Activated naive CD4-positive, alpha-beta T cell treated with anti-CD3 and anti-CD28 coated beads for 36 hours (primary cell): ENCODE measurements at regions of chr10 and their contacts with region 1.

Region 1: GRCh38 chr10:122435212-122435827 is 19.1 kb upstream of the ARMS2 start:
- DNase-seq: no peak
- H3K4me3 Mint-ChIP-seq: no peak overlapping the region
- H3K27ac Mint-ChIP-seq: no peak overlapping the region
- H3K4me1 Mint-ChIP-seq: peaks cover 5% of the 10 kb centered on the region
- H3K27me3 Mint-ChIP-seq: no peaks in the 10 kb centered on the region

Region 2: DNA sequence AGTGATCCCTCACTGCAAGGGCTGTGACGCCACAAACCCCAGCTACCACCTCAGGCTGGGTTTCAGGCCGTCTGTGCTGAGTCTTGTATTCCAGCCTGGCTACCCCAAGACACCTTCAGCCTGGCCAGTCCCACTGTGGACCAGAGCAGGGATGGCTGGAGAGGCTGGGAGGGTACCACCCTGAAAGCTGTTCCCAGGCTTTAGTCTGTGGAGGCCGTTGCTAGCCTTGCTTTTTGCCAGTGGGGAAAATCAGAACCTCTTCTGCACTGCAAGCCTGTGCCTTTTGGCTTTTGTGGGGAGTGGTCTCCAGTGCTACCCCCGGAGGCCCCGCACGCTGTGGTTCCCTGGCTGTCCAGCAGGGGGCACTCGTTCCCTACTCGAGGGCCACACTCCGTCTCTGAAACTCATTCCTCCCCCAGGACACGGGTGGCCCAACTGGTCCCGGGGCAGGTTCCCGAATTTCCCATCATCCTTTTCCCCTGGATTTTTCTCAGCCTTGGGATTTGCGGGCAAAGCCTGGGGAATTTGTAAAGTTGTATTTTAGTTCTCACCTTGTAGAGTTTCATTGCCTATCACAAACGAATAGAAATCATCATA is 292.6 kb before region 1 on chr10:
- CTCF ChIA-PET with region 1: no interaction called
- intact Hi-C with region 1: loop called (anchors 10 kb)
- DNase-seq: peak; percentile 38
- H3K4me3 Mint-ChIP-seq: no peak overlapping the region
- H3K27ac Mint-ChIP-seq: no peak overlapping the region
- H3K4me1 Mint-ChIP-seq: no peaks in the 10 kb centered on the region
- H3K27me3 Mint-ChIP-seq: peaks cover 4% of the 10 kb centered on the region

Region 3: GRCh38 chr10:122267849-122268737 is 167.2 kb before region 1 on chr10:
- CTCF ChIA-PET with region 1: interaction called, 13 read pairs
- intact Hi-C with region 1: no loop called
- DNase-seq: peak; percentile 65
- H3K4me3 Mint-ChIP-seq: no peak overlapping the region
- H3K27ac Mint-ChIP-seq: no peak overlapping the region
- H3K4me1 Mint-ChIP-seq: no peaks in the 10 kb centered on the region
- H3K27me3 Mint-ChIP-seq: peaks cover 6% of the 10 kb centered on the region

Region 4: GRCh38 chr10:122298598-122299301 is 136.6 kb before region 1 on chr10:
- CTCF ChIA-PET with region 1: interaction called, 44 read pairs
- intact Hi-C with region 1: loop called (anchors 1 kb)
- DNase-seq: peak; percentile 82
- H3K4me3 Mint-ChIP-seq: no peak overlapping the region
- H3K27ac Mint-ChIP-seq: no peak overlapping the region
- H3K4me1 Mint-ChIP-seq: peaks cover 3% of the 10 kb centered on the region
- H3K27me3 Mint-ChIP-seq: no peaks in the 10 kb centered on the region

Region 5: GRCh38 chr10:122342293-122343134 is 92.8 kb before region 1 on chr10:
- CTCF ChIA-PET with region 1: interaction called, 65 read pairs
- intact Hi-C with region 1: loop called (anchors 1 kb)
- DNase-seq: peak; percentile 80
- H3K4me3 Mint-ChIP-seq: no peak overlapping the region
- H3K27ac Mint-ChIP-seq: peak overlapping the region; percentile 31
- H3K4me1 Mint-ChIP-seq: peaks cover 10% of the 10 kb centered on the region
- H3K27me3 Mint-ChIP-seq: no peaks in the 10 kb centered on the region

Region 6: GRCh38 chr10:122368502-122369256 is 66.6 kb before region 1 on chr10:
- CTCF ChIA-PET with region 1: interaction called, 12 read pairs
- intact Hi-C with region 1: no loop called
- DNase-seq: no peak
- H3K4me3 Mint-ChIP-seq: no peak overlapping the region
- H3K27ac Mint-ChIP-seq: no peak overlapping the region
- H3K4me1 Mint-ChIP-seq: peaks cover 4% of the 10 kb centered on the region
- H3K27me3 Mint-ChIP-seq: no peaks in the 10 kb centered on the region

Region 7: GRCh38 chr10:122703439-122704118 is 268.3 kb after region 1 on chr10:
- CTCF ChIA-PET with region 1: no interaction called
- intact Hi-C with region 1: loop called (anchors 10 kb)
- DNase-seq: peak; percentile 72
- H3K4me3 Mint-ChIP-seq: no peak overlapping the region
- H3K27ac Mint-ChIP-seq: no peak overlapping the region
- H3K4me1 Mint-ChIP-seq: peaks cover 5% of the 10 kb centered on the region
- H3K27me3 Mint-ChIP-seq: no peaks in the 10 kb centered on the region